Lower leg skin (tissue), 4 donors: ENCODE measurements at regions of chr9 and their contacts with region 1.

Region 1: GRCh38 chr9:113454914-113455761 is 8.4 kb upstream of the RGS3 start:
- DNase-seq: peak in 1 of 2 donors; percentile 41
- H3K4me3 ChIP-seq: no peak overlapping the region
- CTCF ChIP-seq: no peak
- POLR2A ChIP-seq: no peak

Region 2: DNA sequence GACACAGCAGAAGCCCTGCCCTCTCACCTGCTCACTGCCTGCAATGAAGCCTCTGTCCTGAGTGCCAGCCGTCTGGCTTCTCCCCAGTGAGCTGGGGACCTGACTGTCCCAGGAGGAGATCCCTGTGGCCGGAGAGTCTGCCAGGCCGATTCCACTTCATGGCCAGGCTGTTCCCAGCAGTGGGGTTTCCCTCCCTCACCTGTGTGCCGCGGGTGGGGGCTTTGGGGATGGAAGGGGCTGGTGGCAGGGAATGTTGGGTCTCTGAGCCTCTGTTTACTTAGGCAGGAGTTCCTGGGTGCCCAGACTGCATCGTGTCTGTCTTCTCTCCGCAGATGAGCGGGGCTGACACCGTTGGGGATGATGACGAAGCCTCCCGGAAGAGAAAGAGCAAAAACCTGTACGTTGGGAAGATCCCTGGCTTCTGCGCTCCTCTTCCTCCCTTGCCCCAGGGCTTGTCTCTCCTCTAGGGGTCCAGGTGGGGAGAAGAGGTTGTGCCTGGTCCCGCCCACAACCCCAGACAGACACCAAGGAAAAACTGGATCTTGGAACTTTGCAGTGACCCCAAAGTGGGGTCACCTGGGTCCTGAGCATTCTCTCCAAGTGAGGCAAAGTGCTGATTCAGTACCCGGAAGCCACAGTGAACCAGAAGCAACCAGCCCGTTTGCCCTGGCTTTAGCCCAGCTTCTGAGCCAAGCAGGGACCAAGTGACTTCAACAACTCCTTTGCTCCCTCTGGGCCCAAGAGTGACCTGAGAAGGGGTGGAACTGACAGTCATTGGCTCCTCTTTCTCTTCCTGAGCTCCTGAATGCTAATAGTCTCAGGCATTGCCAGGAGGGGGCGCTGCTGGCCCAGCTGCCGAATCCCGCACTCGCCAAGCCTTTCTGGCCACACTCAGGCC is 136.1 kb after region 1 on chr9:
- intact Hi-C with region 1: loop called (anchors 10 kb)
- DNase-seq: peak; percentile 80 to 97
- H3K4me3 ChIP-seq: no peak overlapping the region
- CTCF ChIP-seq: peak in 1 of 3 donors; percentile 87
- POLR2A ChIP-seq: no peak